A673 (cell line): ENCODE measurements at regions of chr3 and their contacts with region 1.

Region 1: GRCh38 chr3:68904064-68904463 is 28.3 kb downstream of the TAFA4 start:
- DNase-seq: no peak
- H3K4me3 ChIP-seq: no peak overlapping the region
- H3K27ac ChIP-seq: no peak overlapping the region
- H3K4me1 ChIP-seq: no peaks in the 10 kb centered on the region
- H3K27me3 ChIP-seq: peaks cover 17% of the 10 kb centered on the region
- CTCF ChIP-seq: no peak

Region 2: DNA sequence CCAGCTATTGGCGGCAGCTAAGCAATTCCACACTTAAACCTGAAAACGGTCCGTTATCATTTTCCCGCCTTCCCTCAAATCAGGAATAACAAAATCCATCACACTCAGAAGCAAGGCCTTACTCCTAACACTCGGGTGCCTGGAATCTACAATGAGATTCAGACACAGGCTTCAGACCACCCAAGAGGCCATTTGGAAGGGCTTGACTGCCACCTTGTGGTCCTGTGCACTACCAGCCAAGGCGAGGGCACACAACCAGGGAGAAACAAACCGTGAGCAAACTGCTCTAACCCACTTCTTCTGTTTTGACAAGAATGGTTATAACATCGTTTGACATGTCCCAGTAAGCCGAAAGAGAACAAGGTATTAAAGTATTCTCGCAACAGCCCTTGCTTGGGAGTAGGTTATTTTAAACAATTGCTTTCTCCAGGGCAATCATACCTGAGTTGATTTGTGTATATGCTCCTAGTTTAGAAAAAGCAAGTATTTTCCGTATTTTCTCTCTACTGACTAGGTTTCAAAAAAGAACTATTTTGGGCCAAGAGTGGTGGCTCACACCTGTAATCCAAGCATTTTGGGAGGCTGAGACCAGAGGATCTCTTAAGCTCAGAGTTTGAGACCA is 68.4 kb after region 1 on chr3:
- CTCF ChIA-PET with region 1: no interaction called
- POLR2A ChIA-PET with region 1: no interaction called
- intact Hi-C with region 1: loop called (anchors 5 kb)
- DNase-seq: peak; percentile 67
- H3K4me3 ChIP-seq: no peak overlapping the region
- H3K27ac ChIP-seq: no peak overlapping the region
- H3K4me1 ChIP-seq: no peaks in the 10 kb centered on the region
- H3K27me3 ChIP-seq: no peaks in the 10 kb centered on the region
- CTCF ChIP-seq: peak; percentile 68